H1 (cell line): ENCODE measurements at regions of chr14 and their contacts with region 1.

Region 1: GRCh38 chr14:101588990-101589389 is 27.7 kb downstream of the DIO3 start:
- DNase-seq: no peak
- H3K4me3 ChIP-seq: no peak overlapping the region
- H3K27ac ChIP-seq: no peak overlapping the region
- H3K4me1 ChIP-seq: no peaks in the 10 kb centered on the region; a peak in 1 of 7 replicates
- H3K27me3 ChIP-seq: no peaks in the 10 kb centered on the region
- CTCF ChIP-seq: no peak
- EP300 ChIP-seq: no peak
- POLR2A ChIP-seq: no peak
- RAD21 ChIP-seq: no peak

Region 2: GRCh38 chr14:101549154-101549553 is 39.8 kb before region 1 on chr14:
- CTCF ChIA-PET with region 1: no interaction called
- POLR2A ChIA-PET with region 1: no interaction called
- DNase-seq: no peak
- H3K4me3 ChIP-seq: no peak overlapping the region
- H3K27ac ChIP-seq: no peak overlapping the region
- H3K4me1 ChIP-seq: peaks cover 0 to 3% (median 0%) of the 10 kb centered on the region in 4 experiments; a peak in 2 of 7 replicates
- H3K27me3 ChIP-seq: no peaks in the 10 kb centered on the region
- CTCF ChIP-seq: no peak
- EP300 ChIP-seq: no peak
- POLR2A ChIP-seq: no peak
- RAD21 ChIP-seq: no peak

Region 3: DNA sequence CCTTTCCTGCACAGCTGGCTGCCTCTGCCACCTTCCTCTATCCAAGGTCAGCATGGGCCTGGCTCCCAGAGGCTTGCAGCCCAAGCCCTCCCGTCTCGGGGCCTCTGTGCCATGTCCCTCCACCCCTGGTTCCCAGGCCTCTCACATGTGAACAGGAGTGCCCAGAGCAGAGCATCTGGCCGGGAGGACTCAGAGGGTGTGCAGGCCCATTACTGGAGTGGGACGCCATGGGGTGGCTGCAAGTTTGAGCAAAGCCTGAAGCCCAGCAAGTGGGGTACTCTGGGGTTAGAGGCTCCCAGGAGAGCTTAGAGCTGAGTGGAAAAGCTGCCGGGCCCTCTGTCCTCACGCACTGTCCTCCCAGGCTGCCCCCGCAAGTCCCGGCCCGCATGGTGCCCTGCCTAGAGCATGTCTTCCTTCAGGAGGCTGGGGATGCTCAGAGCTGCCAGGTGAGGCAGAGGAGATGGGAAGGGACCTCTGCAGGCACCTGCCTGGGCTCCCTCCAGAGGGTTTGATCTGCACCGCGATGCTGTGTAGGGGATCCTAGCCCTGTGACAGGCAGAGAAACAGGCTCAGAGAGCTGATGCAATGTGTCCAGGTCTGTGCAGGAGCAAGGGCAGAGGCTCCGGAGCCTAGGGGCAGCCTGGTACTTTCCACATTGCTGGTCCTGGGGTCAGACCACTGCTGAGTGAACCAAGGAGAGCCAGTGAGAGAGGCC is 12.1 kb after region 1 on chr14:
- CTCF ChIA-PET with region 1: interaction called, 14 read pairs
- POLR2A ChIA-PET with region 1: no interaction called
- DNase-seq: no peak
- H3K4me3 ChIP-seq: no peak overlapping the region
- H3K27ac ChIP-seq: no peak overlapping the region
- H3K4me1 ChIP-seq: no peaks in the 10 kb centered on the region
- H3K27me3 ChIP-seq: no peaks in the 10 kb centered on the region
- CTCF ChIP-seq: no peak
- EP300 ChIP-seq: no peak
- POLR2A ChIP-seq: no peak
- RAD21 ChIP-seq: no peak

Region 4: DNA sequence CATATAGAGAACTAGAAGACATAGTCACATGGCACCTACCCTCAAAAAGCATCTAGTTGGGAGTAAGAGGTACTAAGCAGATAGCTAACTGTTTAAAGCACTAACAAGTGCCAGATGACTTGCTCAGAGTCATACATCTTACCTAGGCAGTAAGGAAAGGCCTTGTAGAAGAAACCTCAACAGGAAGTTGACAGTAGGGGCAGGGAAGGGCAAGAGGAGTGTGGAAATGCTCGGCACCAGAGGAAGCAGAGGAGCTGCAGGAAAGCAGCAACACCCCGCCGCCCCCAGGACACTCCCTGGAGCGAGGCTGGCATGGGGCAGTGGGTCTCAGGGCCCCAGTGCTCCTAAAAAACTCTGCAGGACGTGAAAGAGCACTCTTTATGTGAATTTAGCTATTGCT is 265.4 kb after region 1 on chr14:
- CTCF ChIA-PET with region 1: no interaction called
- POLR2A ChIA-PET with region 1: no interaction called
- DNase-seq: no peak
- H3K4me3 ChIP-seq: no peak overlapping the region
- H3K27ac ChIP-seq: no peak overlapping the region
- H3K4me1 ChIP-seq: no peaks in the 10 kb centered on the region
- H3K27me3 ChIP-seq: no peaks in the 10 kb centered on the region
- CTCF ChIP-seq: no peak
- EP300 ChIP-seq: no peak
- POLR2A ChIP-seq: no peak
- RAD21 ChIP-seq: no peak